ENCODE measurements at regions of chr13 and their contacts with region 1.

Region 1: GRCh38 chr13:32850316-32851052 is 165.7 kb upstream of the KL start:
- DNase-seq: no peak
- ATAC-seq: no peak
- H3K4me3 ChIP-seq: no peak overlapping the region
- H3K27ac ChIP-seq: no peak overlapping the region
- H3K4me1 ChIP-seq: peaks cover 2% of the 10 kb centered on the region; the same call in 1 of the 2 replicates
- H3K27me3 ChIP-seq: peaks cover 7% of the 10 kb centered on the region
- CTCF ChIP-seq: no peak
- POLR2A ChIP-seq: no peak
- RAD21 ChIP-seq: no peak

Region 2: GRCh38 chr13:32746474-32746873 is 104.0 kb before region 1 on chr13:
- CTCF ChIA-PET with region 1: no interaction called
- POLR2A ChIA-PET with region 1: no interaction called
- dilution Hi-C with region 1: no loop called
- in situ Hi-C with region 1: no loop called
- intact Hi-C with region 1: loop called (anchors 2 kb)
- DNase-seq: no peak
- ATAC-seq: no peak; the same call in 1 of the 2 replicates
- H3K4me3 ChIP-seq: no peak overlapping the region
- H3K27ac ChIP-seq: no peak overlapping the region
- H3K4me1 ChIP-seq: peaks cover 2% of the 10 kb centered on the region; the same call in 1 of the 2 replicates
- H3K27me3 ChIP-seq: no peaks in the 10 kb centered on the region
- CTCF ChIP-seq: no peak
- POLR2A ChIP-seq: no peak
- RAD21 ChIP-seq: no peak

Region 3: DNA sequence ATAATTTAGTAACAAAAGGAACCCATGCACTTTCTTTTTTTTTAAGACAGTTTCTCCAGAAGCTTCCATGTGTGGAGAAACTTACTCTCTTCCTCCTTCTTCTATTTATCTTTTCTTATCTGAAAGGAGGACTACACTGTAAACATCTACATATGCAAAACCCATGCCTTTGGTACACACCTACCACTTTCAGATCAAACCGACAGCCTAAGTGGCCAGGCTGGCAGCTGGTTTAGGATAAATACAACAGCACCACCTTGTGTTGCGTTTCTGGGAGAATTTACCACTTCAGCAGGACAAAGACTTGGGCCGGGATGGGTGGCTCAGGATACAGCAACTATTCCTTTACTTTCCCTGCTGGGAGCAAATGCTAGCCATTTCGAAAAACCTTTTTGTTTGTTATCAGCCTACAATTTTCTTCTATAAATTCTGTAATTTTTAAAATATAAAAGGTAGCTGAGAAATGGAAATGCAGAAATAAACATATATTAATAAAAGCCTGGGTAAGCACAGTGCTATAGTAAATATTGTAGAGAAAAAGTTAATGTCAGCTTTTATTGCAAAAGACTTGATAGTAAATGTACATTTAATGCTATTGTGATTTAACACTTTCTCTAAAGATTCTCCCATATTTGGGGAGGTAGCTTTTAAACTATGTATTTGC is 873.4 kb after region 1 on chr13:
- CTCF ChIA-PET with region 1: no interaction called
- POLR2A ChIA-PET with region 1: no interaction called
- dilution Hi-C with region 1: no loop called
- in situ Hi-C with region 1: no loop called
- intact Hi-C with region 1: no loop called
- DNase-seq: peak; percentile 85
- ATAC-seq: peak; percentile 94
- H3K4me3 ChIP-seq: no peak overlapping the region
- H3K27ac ChIP-seq: no peak overlapping the region
- H3K4me1 ChIP-seq: peaks cover 6% of the 10 kb centered on the region; the same call in 1 of the 2 replicates
- H3K27me3 ChIP-seq: no peaks in the 10 kb centered on the region
- CTCF ChIP-seq: peak; percentile 84
- POLR2A ChIP-seq: no peak
- RAD21 ChIP-seq: peak; percentile 88